ENCODE measurements at regions of chr14 and their contacts with region 1.

Region 1: DNA sequence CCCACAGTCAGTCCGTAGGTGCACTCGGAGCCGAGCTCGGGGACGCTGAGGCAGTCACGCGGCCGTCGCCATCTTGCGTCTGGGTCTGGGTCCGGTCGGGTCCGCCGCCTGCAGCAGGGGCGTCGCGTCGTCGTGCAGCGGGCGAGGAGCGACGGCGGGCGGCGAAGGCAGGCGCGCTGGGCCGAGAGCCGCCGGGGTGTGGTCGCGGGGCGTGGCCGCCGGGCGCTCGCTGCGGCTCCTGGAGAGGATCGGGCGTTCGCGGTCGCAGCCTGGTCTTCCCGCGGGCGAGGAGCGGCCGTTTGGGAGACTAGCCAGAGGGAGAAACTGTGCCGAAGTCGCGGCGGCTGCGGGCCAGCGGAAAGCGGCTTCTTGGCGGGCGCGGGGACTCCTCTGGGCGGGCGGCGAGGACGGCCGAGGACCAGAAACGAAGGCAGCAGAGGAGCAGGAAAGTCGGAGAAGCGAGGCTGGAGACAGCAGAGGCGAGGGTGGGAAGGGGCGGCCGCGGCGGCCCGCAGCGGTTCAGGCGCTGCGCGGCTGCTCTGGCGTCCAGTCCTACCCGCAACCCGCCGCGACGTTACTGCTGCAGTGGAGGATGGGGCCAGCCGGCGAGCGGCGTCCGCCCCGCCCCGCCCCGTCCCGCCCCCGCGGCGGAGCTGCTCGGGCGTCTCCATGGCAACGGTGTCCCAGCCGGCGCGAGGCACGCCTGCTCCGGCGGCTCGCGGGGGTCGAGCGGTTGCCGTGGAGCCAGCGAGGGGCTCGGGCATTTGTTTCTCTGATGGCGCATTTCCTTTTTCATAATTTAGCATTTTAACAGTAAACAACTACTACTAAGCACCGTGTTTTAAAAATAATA is at the start of gene PNMA1:
- DNase-seq: peak; percentile 76 to 90 (median 83)
- ATAC-seq: peak; percentile 91
- H3K4me3 ChIP-seq: peak within 1 kb of the TSS; percentile 92
- H3K4me3 Mint-ChIP-seq: peak within 1 kb of the TSS; percentile 91 to 100 (median 97)
- H3K27ac ChIP-seq: peak within 1 kb of the TSS; percentile 83
- H3K27ac Mint-ChIP-seq: peak within 1 kb of the TSS; percentile 93 to 99 (median 96)
- H3K4me1 ChIP-seq: peaks cover 3 to 4% of the 10 kb centered on the region in 2 donors
- H3K4me1 Mint-ChIP-seq: peaks cover 22 to 40% (median 26%) of the 10 kb centered on the region in 7 donors
- H3K27me3 ChIP-seq: no peaks in the 10 kb centered on the region
- H3K27me3 Mint-ChIP-seq: no peaks in the 10 kb centered on the region
- total RNA-seq, gene PNMA1: 21.6 to 40.4 (median 37.1) TPM

Region 2: GRCh38 chr14:73136387-73137225 is 577.4 kb before region 1 on chr14 and contains the start of gene PSEN1:
- CTCF ChIA-PET with region 1: no interaction called
- POLR2A ChIA-PET with region 1: no interaction called
- intact Hi-C with region 1: loop called in 1 of 2 experiments (anchors 5 kb)
- DNase-seq: peak; percentile 97 to 100 (median 98)
- ATAC-seq: peak; percentile 96
- H3K4me3 ChIP-seq: peak within 1 kb of the TSS; percentile 93
- H3K4me3 Mint-ChIP-seq: peak within 1 kb of the TSS; percentile 82 to 99 (median 91)
- H3K27ac ChIP-seq: peak within 1 kb of the TSS; percentile 98
- H3K27ac Mint-ChIP-seq: peak within 1 kb of the TSS; percentile 71 to 99 (median 96)
- H3K4me1 ChIP-seq: peaks cover 7 to 17% of the 10 kb centered on the region in 2 donors
- H3K4me1 Mint-ChIP-seq: peaks cover 17 to 39% (median 36%) of the 10 kb centered on the region in 7 donors
- H3K27me3 ChIP-seq: no peaks in the 10 kb centered on the region
- H3K27me3 Mint-ChIP-seq: no peaks in the 10 kb centered on the region
- total RNA-seq, gene PSEN1: 32.7 to 55.8 (median 49.3) TPM

Region 3: DNA sequence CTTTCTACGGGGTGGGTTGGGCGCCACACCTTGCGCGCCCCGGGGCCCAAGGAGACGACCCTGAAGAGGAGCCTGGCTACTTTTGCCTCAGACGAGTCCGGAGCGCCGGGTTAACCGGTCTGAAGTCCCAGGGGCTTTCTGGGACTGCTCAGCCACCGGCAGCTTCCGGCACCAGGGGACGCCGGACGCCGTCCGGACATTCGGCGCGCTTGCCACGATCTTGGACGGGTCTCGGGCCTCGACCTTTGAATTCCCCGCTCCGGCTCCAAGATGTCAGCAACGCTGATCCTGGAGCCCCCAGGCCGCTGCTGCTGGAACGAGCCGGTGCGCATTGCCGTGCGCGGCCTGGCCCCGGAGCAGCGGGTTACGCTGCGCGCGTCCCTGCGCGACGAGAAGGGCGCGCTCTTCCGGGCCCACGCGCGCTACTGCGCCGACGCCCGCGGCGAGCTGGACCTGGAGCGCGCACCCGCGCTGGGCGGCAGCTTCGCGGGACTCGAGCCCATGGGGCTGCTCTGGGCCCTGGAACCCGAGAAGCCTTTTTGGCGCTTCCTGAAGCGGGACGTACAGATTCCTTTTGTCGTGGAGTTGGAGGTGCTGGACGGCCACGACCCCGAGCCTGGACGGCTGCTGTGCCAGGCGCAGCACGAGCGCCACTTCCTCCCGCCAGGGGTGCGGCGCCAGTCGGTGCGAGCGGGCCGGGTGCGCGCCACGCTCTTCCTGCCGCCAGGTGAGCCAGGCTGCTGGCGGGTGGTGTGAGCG is 122.2 kb before region 1 on chr14 and contains the start of gene ACOT4:
- CTCF ChIA-PET with region 1: no interaction called
- POLR2A ChIA-PET with region 1: no interaction called
- intact Hi-C with region 1: loop called in 1 of 2 experiments (anchors 2 kb)
- DNase-seq: peak; percentile 43 to 77 (median 73)
- ATAC-seq: peak; percentile 93
- H3K4me3 ChIP-seq: peak within 1 kb of the TSS; percentile 74
- H3K4me3 Mint-ChIP-seq: peak within 1 kb of the TSS; percentile 61 to 87 (median 79)
- H3K27ac ChIP-seq: peak within 1 kb of the TSS; percentile 63
- H3K27ac Mint-ChIP-seq: peak within 1 kb of the TSS in 8 of 9 donors; percentile 29 to 89 (median 70)
- H3K4me1 ChIP-seq: no peaks in the 10 kb centered on the region
- H3K4me1 Mint-ChIP-seq: peaks cover 0 to 19% (median 5%) of the 10 kb centered on the region in 7 donors
- H3K27me3 ChIP-seq: no peaks in the 10 kb centered on the region
- H3K27me3 Mint-ChIP-seq: peaks cover 0 to 10% (median 0%) of the 10 kb centered on the region in 5 donors
- total RNA-seq, gene ACOT4: 0.69 to 1.0 (median 0.89) TPM

Region 4: GRCh38 chr14:73753959-73754882 is 40.2 kb after region 1 on chr14:
- CTCF ChIA-PET with region 1: no interaction called
- POLR2A ChIA-PET with region 1: interaction called, 22 read pairs
- intact Hi-C with region 1: loop called in 1 of 2 experiments (anchors 1 kb)
- DNase-seq: peak in 2 of 9 donors; percentile 29 to 45
- ATAC-seq: peak; percentile 53
- H3K4me3 ChIP-seq: peak overlapping the region; percentile 59
- H3K4me3 Mint-ChIP-seq: peak overlapping the region; percentile 83 to 97 (median 90)
- H3K27ac ChIP-seq: peak overlapping the region; percentile 86
- H3K27ac Mint-ChIP-seq: peak overlapping the region; percentile 84 to 99 (median 99)
- H3K4me1 ChIP-seq: peaks cover 85 to 86% of the 10 kb centered on the region in 2 donors
- H3K4me1 Mint-ChIP-seq: peaks cover 79 to 95% (median 93%) of the 10 kb centered on the region in 7 donors
- H3K27me3 ChIP-seq: no peaks in the 10 kb centered on the region
- H3K27me3 Mint-ChIP-seq: no peaks in the 10 kb centered on the region

Region 5: DNA sequence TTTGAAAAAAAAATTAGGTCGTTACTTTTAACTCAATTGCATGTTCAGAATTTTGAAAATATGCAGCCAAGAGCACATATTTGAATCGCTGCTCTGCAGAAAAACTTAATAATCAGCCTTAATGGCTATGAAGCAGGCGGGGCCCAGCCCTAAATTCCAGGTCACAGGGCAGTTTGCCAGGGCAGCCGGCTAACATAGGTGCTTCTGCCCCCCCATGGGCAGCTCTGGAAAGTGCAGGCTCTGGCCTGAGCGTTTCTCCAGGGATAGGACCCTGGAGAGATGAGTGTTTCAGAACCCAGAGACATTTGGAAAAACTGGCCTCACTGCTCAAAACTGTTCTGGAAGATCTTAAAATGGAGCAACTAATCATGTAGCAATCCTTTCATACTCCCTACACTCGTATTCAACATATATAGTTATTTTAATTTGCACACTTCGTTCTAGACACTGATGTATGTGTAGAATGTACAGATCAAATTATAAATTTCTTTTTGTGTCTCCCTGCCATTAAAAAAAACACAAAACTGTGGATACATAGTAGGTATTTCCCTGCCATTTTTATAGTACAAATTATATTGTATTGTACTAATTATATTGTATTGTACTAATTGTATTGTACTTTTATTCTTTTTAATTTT is 111.6 kb after region 1 on chr14:
- CTCF ChIA-PET with region 1: interaction called, 3 read pairs
- POLR2A ChIA-PET with region 1: no interaction called
- intact Hi-C with region 1: loop called in 1 of 2 experiments (anchors 5 kb)
- DNase-seq: peak; percentile 51 to 76 (median 66)
- ATAC-seq: peak; percentile 96
- H3K4me3 ChIP-seq: no peak overlapping the region
- H3K4me3 Mint-ChIP-seq: no peak overlapping the region
- H3K27ac ChIP-seq: no peak overlapping the region
- H3K27ac Mint-ChIP-seq: no peak overlapping the region
- H3K4me1 ChIP-seq: no peaks in the 10 kb centered on the region
- H3K4me1 Mint-ChIP-seq: peaks cover 0 to 21% (median 0%) of the 10 kb centered on the region in 7 donors
- H3K27me3 ChIP-seq: no peaks in the 10 kb centered on the region
- H3K27me3 Mint-ChIP-seq: peaks cover 0 to 3% (median 0%) of the 10 kb centered on the region in 5 donors

Region 6: GRCh38 chr14:73949744-73950734 is 236.0 kb after region 1 on chr14 and contains the starts of genes COQ6 and FAM161B:
- CTCF ChIA-PET with region 1: no interaction called
- POLR2A ChIA-PET with region 1: no interaction called
- intact Hi-C with region 1: loop called in 1 of 2 experiments (anchors 2 kb)
- DNase-seq: peak; percentile 82 to 97 (median 95)
- ATAC-seq: peak; percentile 96
- H3K4me3 ChIP-seq: peak within 1 kb of the TSS; percentile 92
- H3K4me3 Mint-ChIP-seq: peak within 1 kb of the TSS; percentile 96 to 99 (median 98)
- H3K27ac ChIP-seq: peak within 1 kb of the TSS; percentile 94
- H3K27ac Mint-ChIP-seq: peak within 1 kb of the TSS; percentile 93 to 98 (median 95)
- H3K4me1 ChIP-seq: peaks cover 0 to 4% of the 10 kb centered on the region in 2 donors
- H3K4me1 Mint-ChIP-seq: peaks cover 5 to 34% (median 27%) of the 10 kb centered on the region in 7 donors
- H3K27me3 ChIP-seq: no peaks in the 10 kb centered on the region
- H3K27me3 Mint-ChIP-seq: no peaks in the 10 kb centered on the region
- total RNA-seq, gene COQ6: 22.8 to 47.3 (median 36.4) TPM
- total RNA-seq, gene FAM161B: 1.8 to 6.6 (median 3.7) TPM

Measured in naive thymus-derived CD4-positive, alpha-beta T cell (primary cell).